Naive thymus-derived CD4-positive, alpha-beta T cell (primary cell): ENCODE measurements at regions of chr17 and their contacts with region 1.

Region 1: GRCh38 chr17:7484067-7484918 is at the start of gene POLR2A:
- DNase-seq: peak; percentile 97 to 99 (median 99)
- ATAC-seq: peak; percentile 80
- H3K4me3 ChIP-seq: peak within 1 kb of the TSS; percentile 100
- H3K4me3 Mint-ChIP-seq: peak within 1 kb of the TSS; percentile 86 to 100 (median 98)
- H3K27ac ChIP-seq: peak within 1 kb of the TSS; percentile 97
- H3K27ac Mint-ChIP-seq: peak within 1 kb of the TSS; percentile 99 to 100 (median 100)
- H3K4me1 ChIP-seq: peaks cover 38 to 55% of the 10 kb centered on the region in 2 donors
- H3K4me1 Mint-ChIP-seq: peaks cover 60 to 81% (median 72%) of the 10 kb centered on the region in 7 donors
- H3K27me3 ChIP-seq: no peaks in the 10 kb centered on the region
- H3K27me3 Mint-ChIP-seq: no peaks in the 10 kb centered on the region
- total RNA-seq, gene POLR2A: 165 to 501 (median 225) TPM

Region 2: GRCh38 chr17:7045909-7046724 is 438.2 kb before region 1 on chr17:
- CTCF ChIA-PET with region 1: no interaction called
- POLR2A ChIA-PET with region 1: no interaction called
- intact Hi-C with region 1: no loop called
- DNase-seq: peak in 8 of 9 donors; percentile 48 to 79 (median 69)
- ATAC-seq: peak; percentile 58
- H3K4me3 ChIP-seq: peak overlapping the region; percentile 66
- H3K4me3 Mint-ChIP-seq: peak overlapping the region; percentile 78 to 91 (median 86)
- H3K27ac ChIP-seq: peak overlapping the region; percentile 74
- H3K27ac Mint-ChIP-seq: peak overlapping the region; percentile 69 to 96 (median 92)
- H3K4me1 ChIP-seq: peaks cover 27 to 30% of the 10 kb centered on the region in 2 donors
- H3K4me1 Mint-ChIP-seq: peaks cover 0 to 53% (median 36%) of the 10 kb centered on the region in 7 donors
- H3K27me3 ChIP-seq: no peaks in the 10 kb centered on the region
- H3K27me3 Mint-ChIP-seq: peaks cover 0 to 36% (median 0%) of the 10 kb centered on the region in 5 donors

Region 3: GRCh38 chr17:7239091-7240027 is 244.9 kb before region 1 on chr17 and contains the start of gene PHF23:
- CTCF ChIA-PET with region 1: no interaction called
- POLR2A ChIA-PET with region 1: no interaction called
- intact Hi-C with region 1: loop called in 1 of 2 experiments (anchors 1 kb)
- DNase-seq: peak; percentile 91 to 98 (median 97)
- ATAC-seq: peak; percentile 78
- H3K4me3 ChIP-seq: peak within 1 kb of the TSS; percentile 76
- H3K4me3 Mint-ChIP-seq: peak within 1 kb of the TSS; percentile 88 to 98 (median 95)
- H3K27ac ChIP-seq: peak within 1 kb of the TSS; percentile 92
- H3K27ac Mint-ChIP-seq: peak within 1 kb of the TSS; percentile 55 to 100 (median 95)
- H3K4me1 ChIP-seq: peaks cover 32 to 44% of the 10 kb centered on the region in 2 donors
- H3K4me1 Mint-ChIP-seq: peaks cover 38 to 67% (median 60%) of the 10 kb centered on the region in 7 donors
- H3K27me3 ChIP-seq: no peaks in the 10 kb centered on the region
- H3K27me3 Mint-ChIP-seq: peaks cover 0 to 7% (median 0%) of the 10 kb centered on the region in 5 donors
- total RNA-seq, gene PHF23: 12.3 to 58.7 (median 55.2) TPM

Region 4: DNA sequence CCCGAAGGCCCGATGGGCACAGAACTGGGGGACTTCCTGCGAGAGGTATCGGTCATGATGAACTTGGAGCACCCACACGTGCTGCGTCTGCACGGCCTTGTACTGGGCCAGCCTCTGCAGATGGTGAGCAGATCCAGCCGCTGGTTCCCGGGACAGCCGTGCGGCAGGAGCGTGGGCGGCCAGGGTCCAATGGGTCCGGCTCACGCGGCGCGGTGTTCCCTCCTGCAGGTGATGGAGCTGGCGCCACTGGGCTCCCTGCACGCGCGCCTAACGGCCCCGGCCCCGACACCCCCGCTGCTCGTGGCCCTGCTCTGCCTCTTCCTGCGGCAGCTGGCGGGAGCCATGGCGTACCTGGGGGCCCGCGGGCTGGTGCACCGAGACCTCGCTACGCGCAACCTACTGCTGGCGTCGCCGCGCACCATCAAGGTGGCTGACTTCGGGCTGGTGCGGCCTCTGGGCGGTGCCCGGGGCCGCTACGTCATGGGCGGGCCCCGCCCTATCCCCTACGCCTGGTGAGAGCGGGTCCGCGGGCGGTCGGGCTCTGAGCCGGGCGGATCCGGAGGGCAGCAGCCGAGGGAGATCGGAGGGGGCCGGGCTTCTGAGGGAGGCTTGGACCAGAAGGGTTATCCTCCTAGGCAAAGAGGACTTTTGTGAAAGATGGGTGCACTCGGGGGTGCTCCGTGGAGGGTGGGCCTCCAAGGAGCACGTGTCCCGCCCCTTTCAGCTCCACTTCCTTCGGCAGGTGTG is 100.4 kb before region 1 on chr17:
- CTCF ChIA-PET with region 1: no interaction called
- POLR2A ChIA-PET with region 1: interaction called, 15 read pairs
- intact Hi-C with region 1: loop called in 1 of 2 experiments (anchors 1 kb)
- DNase-seq: peak; percentile 74 to 88 (median 86)
- ATAC-seq: peak; percentile 98
- H3K4me3 ChIP-seq: peak overlapping the region; percentile 82
- H3K4me3 Mint-ChIP-seq: peak overlapping the region; percentile 74 to 89 (median 82)
- H3K27ac ChIP-seq: peak overlapping the region; percentile 94
- H3K27ac Mint-ChIP-seq: peak overlapping the region; percentile 73 to 96 (median 94)
- H3K4me1 ChIP-seq: peaks cover 10 to 13% of the 10 kb centered on the region in 2 donors
- H3K4me1 Mint-ChIP-seq: peaks cover 10 to 23% (median 15%) of the 10 kb centered on the region in 7 donors
- H3K27me3 ChIP-seq: peaks cover 0 to 11% of the 10 kb centered on the region in 2 donors
- H3K27me3 Mint-ChIP-seq: peaks cover 27 to 37% (median 33%) of the 10 kb centered on the region in 5 donors

Region 5: GRCh38 chr17:7454980-7455379 is 29.3 kb before region 1 on chr17:
- CTCF ChIA-PET with region 1: interaction called, 4 read pairs
- POLR2A ChIA-PET with region 1: interaction called, 199 read pairs
- intact Hi-C with region 1: loop called (anchors 1 kb)
- DNase-seq: no peak
- ATAC-seq: peak; percentile 26
- H3K4me3 ChIP-seq: peak overlapping the region; percentile 92
- H3K4me3 Mint-ChIP-seq: peak overlapping the region; percentile 89 to 96 (median 95)
- H3K27ac ChIP-seq: peak overlapping the region; percentile 77
- H3K27ac Mint-ChIP-seq: peak overlapping the region; percentile 86 to 97 (median 94)
- H3K4me1 ChIP-seq: peaks cover 17 to 20% of the 10 kb centered on the region in 2 donors
- H3K4me1 Mint-ChIP-seq: peaks cover 13 to 44% (median 36%) of the 10 kb centered on the region in 7 donors
- H3K27me3 ChIP-seq: no peaks in the 10 kb centered on the region
- H3K27me3 Mint-ChIP-seq: no peaks in the 10 kb centered on the region

Region 6: DNA sequence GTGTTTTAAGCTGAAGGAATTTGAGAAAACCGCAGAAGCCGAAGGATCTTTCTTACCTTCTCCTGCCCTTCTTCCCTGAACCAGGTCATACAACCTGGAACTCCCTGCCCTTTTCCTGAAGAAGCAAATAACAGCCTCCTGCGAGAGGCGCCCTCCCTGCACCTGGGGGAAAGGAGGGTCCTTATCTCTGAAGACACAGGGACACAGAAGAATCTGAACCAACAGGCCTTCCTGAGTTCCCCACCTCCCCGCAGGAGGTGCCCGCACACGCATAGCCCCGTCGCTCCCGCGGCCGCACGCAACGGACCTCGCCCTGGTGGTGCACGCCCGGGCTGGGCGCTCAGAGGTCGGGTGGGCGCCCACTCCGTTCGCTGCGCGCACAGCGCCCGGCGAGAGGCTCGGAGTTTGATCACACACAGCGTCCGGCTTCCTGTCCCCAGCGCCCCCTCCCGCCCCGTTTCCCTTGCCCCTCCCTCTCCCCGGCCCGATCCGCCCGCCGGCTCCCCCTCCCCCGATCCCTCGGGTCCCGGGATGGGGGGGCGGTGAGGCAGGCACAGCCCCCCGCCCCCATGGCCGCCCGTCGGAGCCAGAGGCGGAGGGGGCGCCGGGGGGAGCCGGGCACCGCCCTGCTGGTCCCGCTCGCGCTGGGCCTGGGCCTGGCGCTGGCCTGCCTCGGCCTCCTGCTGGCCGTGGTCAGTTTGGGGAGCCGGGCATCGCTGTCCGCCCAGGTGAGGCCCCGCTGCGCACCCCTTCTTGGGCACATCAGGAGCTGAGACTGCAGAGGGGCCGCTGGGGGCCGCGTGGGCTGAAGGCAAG is 64.5 kb after region 1 on chr17 and contains the start of gene TNFSF12:
- CTCF ChIA-PET with region 1: no interaction called
- POLR2A ChIA-PET with region 1: interaction called, 5 read pairs
- intact Hi-C with region 1: loop called (anchors 2 kb)
- DNase-seq: peak in 7 of 9 donors; percentile 38 to 69 (median 45)
- ATAC-seq: peak; percentile 60
- H3K4me3 ChIP-seq: peak within 1 kb of the TSS; percentile 91
- H3K4me3 Mint-ChIP-seq: peak within 1 kb of the TSS; percentile 77 to 99 (median 91)
- H3K27ac ChIP-seq: peak within 1 kb of the TSS; percentile 70
- H3K27ac Mint-ChIP-seq: peak within 1 kb of the TSS; percentile 90 to 98 (median 94)
- H3K4me1 ChIP-seq: peaks cover 14 to 35% of the 10 kb centered on the region in 2 donors
- H3K4me1 Mint-ChIP-seq: peaks cover 46 to 60% (median 55%) of the 10 kb centered on the region in 7 donors
- H3K27me3 ChIP-seq: no peaks in the 10 kb centered on the region
- H3K27me3 Mint-ChIP-seq: peaks cover 0 to 2% (median 0%) of the 10 kb centered on the region in 5 donors
- total RNA-seq, gene TNFSF12: 27.3 to 82.4 (median 36.9) TPM

Region 7: GRCh38 chr17:7834962-7835813 is 350.9 kb after region 1 on chr17:
- CTCF ChIA-PET with region 1: no interaction called
- POLR2A ChIA-PET with region 1: interaction called, 3 read pairs
- intact Hi-C with region 1: loop called in 1 of 2 experiments (anchors 1 kb)
- DNase-seq: peak; percentile 76 to 97 (median 95)
- ATAC-seq: peak; percentile 70
- H3K4me3 ChIP-seq: peak overlapping the region; percentile 96
- H3K4me3 Mint-ChIP-seq: peak overlapping the region; percentile 91 to 99 (median 96)
- H3K27ac ChIP-seq: peak overlapping the region; percentile 96
- H3K27ac Mint-ChIP-seq: peak overlapping the region; percentile 95 to 100 (median 99)
- H3K4me1 ChIP-seq: peaks cover 29 to 38% of the 10 kb centered on the region in 2 donors
- H3K4me1 Mint-ChIP-seq: peaks cover 28 to 60% (median 44%) of the 10 kb centered on the region in 7 donors
- H3K27me3 ChIP-seq: no peaks in the 10 kb centered on the region
- H3K27me3 Mint-ChIP-seq: peaks cover 0 to 28% (median 0%) of the 10 kb centered on the region in 5 donors

Region 8: GRCh38 chr17:8138672-8139371 is 654.5 kb after region 1 on chr17:
- CTCF ChIA-PET with region 1: no interaction called
- POLR2A ChIA-PET with region 1: no interaction called
- intact Hi-C with region 1: no loop called
- DNase-seq: peak; percentile 93 to 99 (median 98)
- ATAC-seq: peak; percentile 90
- H3K4me3 ChIP-seq: peak overlapping the region; percentile 76
- H3K4me3 Mint-ChIP-seq: no peak overlapping the region
- H3K27ac ChIP-seq: peak overlapping the region; percentile 84
- H3K27ac Mint-ChIP-seq: no peak overlapping the region
- H3K4me1 ChIP-seq: peaks cover 8 to 17% of the 10 kb centered on the region in 2 donors
- H3K4me1 Mint-ChIP-seq: peaks cover 0 to 5% (median 0%) of the 10 kb centered on the region in 7 donors
- H3K27me3 ChIP-seq: no peaks in the 10 kb centered on the region
- H3K27me3 Mint-ChIP-seq: peaks cover 0 to 11% (median 0%) of the 10 kb centered on the region in 5 donors